ENCODE measurements at regions of chr6 and their contacts with region 1.

Region 1: DNA sequence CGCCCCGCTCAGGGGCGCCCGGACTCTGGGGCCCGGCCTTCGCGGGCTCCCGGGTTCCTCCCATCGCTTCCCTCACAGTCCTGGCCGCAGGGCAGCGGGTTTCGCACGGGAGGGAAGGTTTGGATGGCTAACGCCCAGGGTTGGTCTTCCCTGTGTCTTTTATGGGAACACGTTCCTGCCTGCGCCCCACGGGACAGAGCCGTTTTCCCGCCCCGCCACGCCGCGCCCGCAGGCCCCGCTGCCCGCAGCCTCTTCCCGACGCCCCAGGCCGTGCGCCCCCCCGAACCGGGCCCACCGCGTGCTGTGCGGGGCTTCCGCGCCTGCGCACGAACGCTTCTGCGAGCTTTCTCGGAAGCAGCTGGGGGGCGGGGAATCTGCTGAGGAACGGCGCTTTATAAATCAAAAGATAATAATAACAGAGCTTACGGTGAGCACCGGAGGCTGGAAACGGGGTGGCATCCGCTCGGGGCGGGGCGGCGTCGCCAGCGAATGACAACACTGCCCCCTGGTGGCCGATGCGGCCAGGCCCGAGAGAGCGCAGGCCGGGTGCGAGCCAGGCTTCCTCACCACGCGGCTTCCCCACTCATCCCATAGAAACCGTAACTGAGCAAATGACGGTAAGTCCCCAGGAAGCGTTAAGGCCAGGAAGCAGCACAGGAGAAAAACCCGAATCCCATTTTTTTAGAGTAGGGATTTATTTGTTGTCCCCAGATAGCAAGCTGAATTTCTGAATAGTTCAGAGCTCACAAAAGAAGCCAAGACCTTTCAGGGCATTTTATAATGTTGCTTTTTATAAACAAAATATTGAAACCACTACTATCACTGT is 116.4 kb downstream of the MYLK4 start:
- DNase-seq: peak; percentile 84
- ATAC-seq: peak; percentile 98
- H3K4me3 Mint-ChIP-seq: peak overlapping the region; percentile 56
- H3K27ac Mint-ChIP-seq: peak overlapping the region; percentile 32
- H3K4me1 Mint-ChIP-seq: peaks cover 9% of the 10 kb centered on the region
- H3K27me3 Mint-ChIP-seq: peaks cover 3% of the 10 kb centered on the region
- CTCF ChIP-seq: peak; percentile 99

Region 2: GRCh38 chr6:1596088-1596852 is 1038.1 kb before region 1 on chr6:
- CTCF ChIA-PET with region 1: interaction called, 53 read pairs
- POLR2A ChIA-PET with region 1: no interaction called
- intact Hi-C with region 1: loop called (anchors 2 kb)
- DNase-seq: peak; percentile 67
- ATAC-seq: peak; percentile 80
- H3K4me3 Mint-ChIP-seq: no peak overlapping the region
- H3K27ac Mint-ChIP-seq: no peak overlapping the region
- H3K4me1 Mint-ChIP-seq: no peaks in the 10 kb centered on the region
- H3K27me3 Mint-ChIP-seq: peaks cover 48% of the 10 kb centered on the region
- CTCF ChIP-seq: peak; percentile 92

Region 3: DNA sequence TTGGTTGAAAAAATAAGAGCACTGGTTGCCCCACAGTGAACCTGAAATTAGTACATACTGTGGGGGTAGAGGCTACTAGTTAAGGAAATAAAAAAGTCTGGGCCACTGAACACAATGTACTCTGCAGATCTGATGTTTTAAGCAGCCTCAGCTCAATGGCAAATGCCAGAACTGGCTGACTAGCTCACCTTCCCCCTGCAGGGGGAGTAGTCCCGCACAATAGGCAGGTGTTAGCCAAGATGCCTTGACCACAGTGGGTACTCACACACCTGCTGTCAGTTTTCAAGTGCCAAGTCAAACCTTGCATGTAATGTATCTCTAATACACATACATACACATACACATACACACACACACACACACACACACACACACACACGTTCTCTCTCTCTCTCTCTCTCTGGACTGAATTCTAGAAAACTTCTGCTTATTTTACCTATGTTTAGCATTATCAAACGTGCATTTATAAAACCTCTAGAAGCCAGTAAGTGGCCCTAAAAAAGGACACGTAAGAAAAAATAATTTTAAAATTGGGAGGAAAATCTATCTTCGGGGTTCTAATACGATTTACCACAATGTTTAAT is 425.0 kb before region 1 on chr6:
- CTCF ChIA-PET with region 1: interaction called, 19 read pairs
- POLR2A ChIA-PET with region 1: no interaction called
- intact Hi-C with region 1: no loop called
- DNase-seq: peak; percentile 66
- ATAC-seq: peak; percentile 87
- H3K4me3 Mint-ChIP-seq: no peak overlapping the region
- H3K27ac Mint-ChIP-seq: no peak overlapping the region
- H3K4me1 Mint-ChIP-seq: peaks cover 2% of the 10 kb centered on the region
- H3K27me3 Mint-ChIP-seq: no peaks in the 10 kb centered on the region
- CTCF ChIP-seq: peak; percentile 49

Region 4: GRCh38 chr6:2448820-2449571 is 185.4 kb before region 1 on chr6:
- CTCF ChIA-PET with region 1: interaction called, 8 read pairs
- POLR2A ChIA-PET with region 1: no interaction called
- intact Hi-C with region 1: loop called (anchors 10 kb)
- DNase-seq: peak; percentile 45
- ATAC-seq: peak; percentile 71
- H3K4me3 Mint-ChIP-seq: peak overlapping the region; percentile 47
- H3K27ac Mint-ChIP-seq: peak overlapping the region; percentile 18
- H3K4me1 Mint-ChIP-seq: peaks cover 4% of the 10 kb centered on the region
- H3K27me3 Mint-ChIP-seq: peaks cover 4% of the 10 kb centered on the region
- CTCF ChIP-seq: peak; percentile 86

Region 5: GRCh38 chr6:2608503-2608902 is 25.8 kb before region 1 on chr6:
- CTCF ChIA-PET with region 1: interaction called, 12 read pairs
- POLR2A ChIA-PET with region 1: no interaction called
- intact Hi-C with region 1: no loop called
- DNase-seq: no peak
- ATAC-seq: no peak
- H3K4me3 Mint-ChIP-seq: no peak overlapping the region
- H3K27ac Mint-ChIP-seq: no peak overlapping the region
- H3K4me1 Mint-ChIP-seq: no peaks in the 10 kb centered on the region
- H3K27me3 Mint-ChIP-seq: peaks cover 14% of the 10 kb centered on the region
- CTCF ChIP-seq: no peak

Region 6: DNA sequence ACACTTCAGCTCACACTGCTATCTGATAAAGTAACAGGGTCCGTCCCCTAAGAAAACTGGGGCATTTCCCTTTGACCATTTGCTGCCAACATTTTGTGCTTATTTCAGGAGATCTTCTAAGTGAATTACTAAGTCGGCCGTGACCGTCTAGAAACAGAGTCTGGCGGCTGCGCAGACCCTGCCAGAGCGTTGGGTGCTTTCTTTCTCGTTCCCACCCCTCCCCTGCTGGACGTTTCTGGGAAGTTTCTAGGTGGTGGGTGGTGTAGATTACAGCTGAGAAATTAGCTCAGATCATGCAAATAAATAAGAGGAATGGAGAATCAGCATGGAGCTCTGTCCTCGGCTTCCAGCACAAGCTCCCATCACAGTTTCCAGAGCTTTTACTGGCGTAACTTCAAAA is 11.7 kb before region 1 on chr6:
- CTCF ChIA-PET with region 1: interaction called, 27 read pairs
- POLR2A ChIA-PET with region 1: no interaction called
- intact Hi-C with region 1: no loop called
- DNase-seq: no peak
- ATAC-seq: no peak
- H3K4me3 Mint-ChIP-seq: no peak overlapping the region
- H3K27ac Mint-ChIP-seq: no peak overlapping the region
- H3K4me1 Mint-ChIP-seq: no peaks in the 10 kb centered on the region
- H3K27me3 Mint-ChIP-seq: peaks cover 18% of the 10 kb centered on the region
- CTCF ChIP-seq: no peak

Region 7: GRCh38 chr6:2738373-2738979 is 104.1 kb after region 1 on chr6:
- CTCF ChIA-PET with region 1: interaction called, 10 read pairs
- POLR2A ChIA-PET with region 1: no interaction called
- intact Hi-C with region 1: no loop called
- DNase-seq: peak; percentile 70
- ATAC-seq: peak; percentile 63
- H3K4me3 Mint-ChIP-seq: no peak overlapping the region
- H3K27ac Mint-ChIP-seq: no peak overlapping the region
- H3K4me1 Mint-ChIP-seq: peaks cover 5% of the 10 kb centered on the region
- H3K27me3 Mint-ChIP-seq: peaks cover 2% of the 10 kb centered on the region
- CTCF ChIP-seq: peak; percentile 73

Measured in activated CD8-positive, alpha-beta T cell treated with anti-CD3 and anti-CD28 coated beads for 36 hours (primary cell).